ENCODE measurements at regions of chr2 and their contacts with region 1.

Region 1: GRCh38 chr2:107936433-107937359 is 49.6 kb upstream of the SLC5A7 start:
- DNase-seq: no peak
- ATAC-seq: no peak
- H3K4me3 ChIP-seq: no peak overlapping the region
- H3K27ac ChIP-seq: no peak overlapping the region
- H3K4me1 ChIP-seq: peaks cover 0 to 4% of the 10 kb centered on the region in 2 donors
- H3K27me3 ChIP-seq: no peaks in the 10 kb centered on the region

Region 2: GRCh38 chr2:106629981-106630380 is 1306.7 kb before region 1 on chr2:
- intact Hi-C with region 1: loop called in 1 of 2 experiments (anchors 5 kb)
- DNase-seq: no peak
- ATAC-seq: no peak
- H3K4me3 ChIP-seq: no peak overlapping the region
- H3K27ac ChIP-seq: no peak overlapping the region
- H3K4me1 ChIP-seq: no peaks in the 10 kb centered on the region
- H3K27me3 ChIP-seq: no peaks in the 10 kb centered on the region

Region 3: GRCh38 chr2:106638043-106638442 is 1298.7 kb before region 1 on chr2:
- intact Hi-C with region 1: loop called (anchors 5 to 10 kb)
- DNase-seq: no peak
- ATAC-seq: no peak
- H3K4me3 ChIP-seq: no peak overlapping the region
- H3K27ac ChIP-seq: no peak overlapping the region
- H3K4me1 ChIP-seq: peaks cover 0 to 2% of the 10 kb centered on the region in 2 donors
- H3K27me3 ChIP-seq: no peaks in the 10 kb centered on the region

Region 4: DNA sequence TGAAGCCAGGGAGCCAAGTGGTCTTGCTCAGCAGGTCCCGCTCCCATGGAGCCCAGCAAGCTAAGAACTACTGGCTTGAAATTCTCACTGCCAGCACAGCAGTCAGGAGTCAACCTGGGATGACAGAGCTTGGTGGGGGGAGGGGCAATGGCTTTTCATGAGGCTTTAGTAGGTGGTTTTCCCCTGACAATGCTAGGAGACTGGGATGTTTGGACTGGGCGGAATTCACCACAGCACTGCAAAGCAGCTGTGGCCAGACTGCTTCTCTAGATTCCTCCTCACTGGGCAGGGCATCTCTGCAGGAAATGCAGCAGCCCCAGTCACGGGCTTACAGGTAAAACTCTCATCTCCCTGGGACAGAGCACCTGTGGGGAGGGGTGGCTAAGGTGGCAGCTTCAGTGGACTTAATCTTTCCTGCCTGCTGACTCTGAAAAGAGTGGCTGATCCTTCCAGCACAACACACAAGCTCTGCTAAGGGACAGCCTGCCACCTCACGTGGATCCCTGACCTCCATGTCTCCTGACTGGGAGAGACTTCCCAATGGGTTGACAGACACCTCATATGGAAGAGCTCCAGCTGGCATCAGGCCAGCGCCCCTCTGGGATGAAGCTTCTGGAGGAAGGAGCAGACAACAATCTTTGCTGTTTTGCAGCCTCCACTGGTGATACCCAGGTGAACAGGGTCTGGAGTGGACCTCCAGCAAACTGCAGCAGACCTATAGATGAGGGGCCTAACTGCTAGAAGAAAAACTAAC is 701.0 kb before region 1 on chr2:
- intact Hi-C with region 1: no loop called
- DNase-seq: no peak
- ATAC-seq: no peak
- H3K4me3 ChIP-seq: no peak overlapping the region
- H3K27ac ChIP-seq: no peak overlapping the region
- H3K4me1 ChIP-seq: no peaks in the 10 kb centered on the region
- H3K27me3 ChIP-seq: no peaks in the 10 kb centered on the region

Region 5: DNA sequence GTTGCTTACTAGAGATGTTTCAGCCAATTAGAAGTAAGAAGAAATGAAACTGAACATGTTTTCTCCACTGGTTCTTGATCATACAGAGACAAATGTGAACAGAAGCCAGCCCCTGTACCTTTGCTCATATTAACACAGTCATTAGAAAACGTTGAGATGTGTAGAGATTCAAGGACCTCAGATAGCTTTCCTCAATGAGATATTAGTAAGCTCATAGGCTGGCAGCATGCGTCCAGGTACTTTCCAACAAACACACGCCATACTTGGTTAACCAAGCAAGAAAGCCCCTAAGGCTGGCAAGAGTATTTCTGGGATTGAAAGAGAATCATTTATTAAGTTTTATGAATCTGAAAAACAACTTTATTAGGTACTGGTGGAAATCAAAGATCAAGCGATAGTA is 87.1 kb after region 1 on chr2:
- intact Hi-C with region 1: no loop called
- DNase-seq: no peak
- ATAC-seq: no peak
- H3K4me3 ChIP-seq: no peak overlapping the region
- H3K27ac ChIP-seq: no peak overlapping the region
- H3K4me1 ChIP-seq: no peaks in the 10 kb centered on the region
- H3K27me3 ChIP-seq: no peaks in the 10 kb centered on the region

Region 6: GRCh38 chr2:108034849-108035248 is 98.2 kb after region 1 on chr2:
- intact Hi-C with region 1: loop called in 1 of 2 experiments (anchors 10 kb)
- DNase-seq: no peak
- ATAC-seq: no peak
- H3K4me3 ChIP-seq: no peak overlapping the region
- H3K27ac ChIP-seq: no peak overlapping the region
- H3K4me1 ChIP-seq: no peaks in the 10 kb centered on the region
- H3K27me3 ChIP-seq: no peaks in the 10 kb centered on the region

Region 7: GRCh38 chr2:108048752-108049151 is 112.1 kb after region 1 on chr2:
- intact Hi-C with region 1: no loop called
- DNase-seq: no peak
- ATAC-seq: no peak
- H3K4me3 ChIP-seq: no peak overlapping the region
- H3K27ac ChIP-seq: no peak overlapping the region
- H3K4me1 ChIP-seq: no peaks in the 10 kb centered on the region
- H3K27me3 ChIP-seq: peaks cover 0 to 2% of the 10 kb centered on the region in 2 donors

Region 8: GRCh38 chr2:108169982-108170625 is 233.4 kb after region 1 on chr2:
- intact Hi-C with region 1: loop called (anchors 10 kb)
- DNase-seq: no peak
- ATAC-seq: no peak
- H3K4me3 ChIP-seq: no peak overlapping the region
- H3K27ac ChIP-seq: no peak overlapping the region
- H3K4me1 ChIP-seq: no peaks in the 10 kb centered on the region
- H3K27me3 ChIP-seq: peaks cover 0 to 2% of the 10 kb centered on the region in 2 donors

Region 9: DNA sequence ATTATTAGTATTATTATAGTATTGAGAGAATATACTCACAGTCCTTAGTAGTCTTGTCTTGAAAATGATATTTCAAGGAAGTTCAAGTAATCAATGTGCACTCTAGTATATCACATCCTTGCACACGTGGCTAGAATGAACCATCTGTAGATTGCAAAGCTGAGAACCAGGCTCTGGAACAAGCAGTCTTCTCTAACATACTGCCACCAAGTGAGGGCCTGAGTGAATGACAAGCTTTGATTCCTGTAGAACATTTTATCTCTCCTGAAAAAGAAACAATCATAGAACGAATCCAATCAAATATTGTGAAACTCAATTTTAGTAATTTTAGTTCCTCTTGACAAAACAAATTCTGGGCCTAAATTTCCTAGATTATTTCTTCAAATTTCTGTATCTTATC is 247.7 kb after region 1 on chr2:
- intact Hi-C with region 1: loop called (anchors 5 to 10 kb)
- DNase-seq: no peak
- ATAC-seq: no peak
- H3K4me3 ChIP-seq: no peak overlapping the region
- H3K27ac ChIP-seq: no peak overlapping the region
- H3K4me1 ChIP-seq: no peaks in the 10 kb centered on the region
- H3K27me3 ChIP-seq: no peaks in the 10 kb centered on the region

Region 10: DNA sequence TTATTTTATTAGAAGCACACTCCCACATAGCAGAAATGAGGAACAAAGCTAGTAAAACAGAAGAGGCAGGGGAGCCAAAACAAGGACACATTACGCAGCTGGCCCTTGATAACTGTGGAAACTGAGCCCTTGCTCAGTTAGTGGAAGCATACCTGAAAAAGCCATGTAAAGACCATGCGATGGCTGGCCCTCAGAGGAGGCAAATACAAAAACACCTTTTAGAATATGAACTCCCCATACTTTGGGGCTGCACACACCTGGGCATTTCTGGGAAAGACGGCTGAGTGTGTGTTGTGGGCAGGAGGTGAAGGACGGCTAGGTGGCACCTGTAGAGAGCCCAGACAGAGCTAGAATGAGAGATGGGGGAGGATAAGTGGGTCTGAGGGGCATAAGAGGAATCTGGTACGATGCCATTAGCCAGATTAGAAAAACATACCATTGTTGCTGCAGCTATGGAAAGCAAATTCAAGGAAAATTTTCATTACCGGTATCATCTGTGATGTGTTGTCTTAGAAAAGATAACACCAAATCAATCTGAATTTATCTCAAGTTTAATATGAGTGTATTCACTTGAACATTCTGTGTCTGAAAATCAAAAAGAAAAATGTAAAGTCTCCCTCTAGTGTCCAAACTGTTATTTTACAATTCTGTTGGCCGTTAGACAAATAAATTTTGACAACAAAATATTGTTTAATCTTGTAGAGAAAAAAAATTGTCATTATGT is 257.9 kb after region 1 on chr2:
- intact Hi-C with region 1: loop called in 1 of 2 experiments (anchors 2 kb)
- DNase-seq: no peak
- ATAC-seq: no peak
- H3K4me3 ChIP-seq: no peak overlapping the region
- H3K27ac ChIP-seq: no peak overlapping the region
- H3K4me1 ChIP-seq: no peaks in the 10 kb centered on the region
- H3K27me3 ChIP-seq: no peaks in the 10 kb centered on the region

Region 11: GRCh38 chr2:108271691-108272253 is 335.1 kb after region 1 on chr2:
- intact Hi-C with region 1: no loop called
- DNase-seq: no peak
- ATAC-seq: peak; percentile 40
- H3K4me3 ChIP-seq: no peak overlapping the region
- H3K27ac ChIP-seq: peak overlapping the region in 1 of 2 donors; percentile 4
- H3K4me1 ChIP-seq: no peaks in the 10 kb centered on the region
- H3K27me3 ChIP-seq: no peaks in the 10 kb centered on the region